ENCODE measurements at regions of chr6 and their contacts with region 1.

Region 1: DNA sequence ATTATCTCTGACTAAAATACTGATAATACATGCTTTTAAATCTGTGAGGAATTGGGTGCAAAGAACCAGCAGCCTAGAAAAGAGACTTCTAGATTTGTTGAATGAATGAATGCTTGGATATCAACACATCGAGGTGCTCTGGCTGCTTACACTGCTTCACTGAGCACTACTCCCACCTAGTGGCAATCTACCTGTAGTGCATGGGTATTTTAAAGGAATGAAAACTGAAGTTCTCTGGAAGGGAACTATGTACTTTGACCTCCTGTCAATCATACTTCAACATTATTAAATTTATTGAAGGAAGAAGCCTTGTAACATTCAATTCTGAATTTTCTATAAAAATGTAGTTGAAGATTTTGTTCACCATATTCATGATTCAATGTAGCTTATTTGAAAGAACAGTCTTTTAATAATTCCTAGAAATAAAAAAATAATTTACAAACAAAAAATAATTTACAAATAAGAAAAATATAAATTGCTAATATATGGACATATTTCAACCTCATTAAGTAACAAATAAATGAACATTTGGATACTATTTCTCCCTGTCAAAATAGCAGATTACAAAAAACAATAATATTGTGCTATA is 111.2 kb upstream of the MMS22L start:
- DNase-seq: peak in 1 of 2 donors; percentile 32
- ATAC-seq: peak in 1 of 8 donors; percentile 58
- H3K4me3 ChIP-seq: no peak overlapping the region
- H3K27ac ChIP-seq: no peak overlapping the region
- H3K4me1 ChIP-seq: no peaks in the 10 kb centered on the region
- H3K27me3 ChIP-seq: no peaks in the 10 kb centered on the region
- CTCF ChIP-seq: peak; percentile 71 to 96 (median 90)

Region 2: GRCh38 chr6:97068211-97068610 is 326.0 kb before region 1 on chr6:
- intact Hi-C with region 1: loop called in 8 of 10 experiments (anchors 5 to 10 kb)
- DNase-seq: no peak
- ATAC-seq: no peak
- H3K4me3 ChIP-seq: no peak overlapping the region
- H3K27ac ChIP-seq: no peak overlapping the region
- H3K4me1 ChIP-seq: no peaks in the 10 kb centered on the region
- H3K27me3 ChIP-seq: peaks cover 0 to 4% (median 0%) of the 10 kb centered on the region in 7 donors
- CTCF ChIP-seq: peak in 7 of 9 donors; percentile 36 to 66 (median 52)

Region 3: DNA sequence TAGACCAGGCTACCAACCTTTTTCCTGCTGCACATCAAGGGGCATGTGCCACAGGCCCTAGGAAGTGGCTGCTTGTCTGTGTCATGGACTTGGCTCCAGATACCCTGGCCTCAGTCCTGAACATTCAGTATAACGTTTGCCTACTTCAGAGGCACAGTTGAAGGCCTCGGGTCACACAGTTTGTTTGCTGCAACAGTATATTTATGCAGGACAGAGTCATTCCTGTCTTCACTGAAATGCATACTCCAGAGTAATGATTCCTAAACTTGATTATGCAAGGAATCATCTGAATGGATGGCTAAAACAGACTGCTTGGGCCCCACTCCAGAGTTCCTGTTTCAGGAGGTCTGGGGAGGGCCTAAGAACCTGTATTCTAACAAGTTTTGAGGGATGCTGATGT is 320.4 kb before region 1 on chr6:
- intact Hi-C with region 1: loop called in 8 of 10 experiments (anchors 5 to 10 kb)
- DNase-seq: no peak
- ATAC-seq: peak in 1 of 8 donors; percentile 35
- H3K4me3 ChIP-seq: no peak overlapping the region
- H3K27ac ChIP-seq: no peak overlapping the region
- H3K4me1 ChIP-seq: no peaks in the 10 kb centered on the region
- H3K27me3 ChIP-seq: no peaks in the 10 kb centered on the region
- CTCF ChIP-seq: no peak

Region 4: GRCh38 chr6:97850458-97851212 is 456.4 kb after region 1 on chr6:
- intact Hi-C with region 1: no loop called
- DNase-seq: no peak
- ATAC-seq: no peak
- H3K4me3 ChIP-seq: no peak overlapping the region
- H3K27ac ChIP-seq: no peak overlapping the region
- H3K4me1 ChIP-seq: no peaks in the 10 kb centered on the region
- H3K27me3 ChIP-seq: no peaks in the 10 kb centered on the region
- CTCF ChIP-seq: no peak

Measured in heart right ventricle (tissue), 16 donors.